ENCODE measurements at regions of chr12 and their contacts with region 1.

Region 1: DNA sequence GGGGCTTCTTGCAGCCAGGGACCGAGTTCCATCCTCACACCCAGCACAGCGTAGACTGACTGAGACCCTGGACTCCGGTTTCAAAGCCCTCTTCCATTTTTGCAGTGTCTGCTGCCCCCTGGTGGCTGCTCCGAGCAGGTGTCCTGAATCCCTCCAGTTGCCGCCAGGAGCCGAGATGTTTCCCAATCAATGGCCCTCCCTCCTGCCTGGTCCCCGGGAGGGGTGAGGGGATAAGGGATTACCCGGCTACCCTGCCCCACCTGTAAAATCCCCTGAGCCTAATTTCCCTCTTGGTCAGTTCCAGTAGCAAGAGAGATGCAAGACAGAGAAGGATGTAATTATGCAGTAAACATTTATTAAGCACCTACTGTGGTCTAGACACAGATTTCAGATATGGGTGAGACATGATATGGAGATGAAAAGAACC is 55.0 kb downstream of the PHETA1 start:
- DNase-seq: peak; percentile 54 to 65 (median 55)
- H3K4me3 ChIP-seq: no peak overlapping the region
- H3K4me3 Mint-ChIP-seq: no peak overlapping the region
- H3K27ac ChIP-seq: no peak overlapping the region
- H3K27ac Mint-ChIP-seq: no peak overlapping the region
- H3K4me1 ChIP-seq: peaks cover 6% of the 10 kb centered on the region
- H3K4me1 Mint-ChIP-seq: peaks cover 2 to 8% (median 6%) of the 10 kb centered on the region in 4 donors
- H3K27me3 ChIP-seq: no peaks in the 10 kb centered on the region
- H3K27me3 Mint-ChIP-seq: peaks cover 7 to 14% of the 10 kb centered on the region in 2 donors

Region 2: DNA sequence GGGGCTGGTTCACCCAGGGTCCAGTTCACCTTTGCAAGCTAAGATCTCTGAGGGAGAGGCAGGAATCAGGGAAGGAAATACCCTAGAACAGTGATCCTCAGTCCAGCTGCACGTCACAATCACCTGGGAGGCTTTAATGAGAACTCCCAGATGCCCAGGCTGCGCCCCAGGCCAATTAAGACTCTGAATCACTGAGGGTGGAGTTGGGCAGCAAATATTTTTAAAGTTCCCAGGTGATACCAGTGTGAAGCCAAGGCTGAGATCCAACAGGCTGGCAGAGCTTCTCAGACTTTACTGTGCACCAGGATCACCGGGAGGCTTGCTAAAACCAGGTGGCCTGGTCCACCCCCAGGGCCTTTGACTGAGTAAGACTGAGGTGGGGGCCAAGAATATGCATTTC is 417.3 kb before region 1 on chr12:
- CTCF ChIA-PET with region 1: interaction called, 7 read pairs
- POLR2A ChIA-PET with region 1: no interaction called
- intact Hi-C with region 1: loop called (anchors 1 kb)
- DNase-seq: no peak
- H3K4me3 ChIP-seq: no peak overlapping the region
- H3K4me3 Mint-ChIP-seq: no peak overlapping the region
- H3K27ac ChIP-seq: no peak overlapping the region
- H3K27ac Mint-ChIP-seq: no peak overlapping the region
- H3K4me1 ChIP-seq: peaks cover 7% of the 10 kb centered on the region
- H3K4me1 Mint-ChIP-seq: peaks cover 4 to 8% (median 5%) of the 10 kb centered on the region in 4 donors
- H3K27me3 ChIP-seq: peaks cover 4% of the 10 kb centered on the region
- H3K27me3 Mint-ChIP-seq: peaks cover 9% of the 10 kb centered on the region in 2 donors

Region 3: GRCh38 chr12:110937104-110937641 is 376.7 kb before region 1 on chr12:
- CTCF ChIA-PET with region 1: interaction called, 12 read pairs
- POLR2A ChIA-PET with region 1: no interaction called
- intact Hi-C with region 1: no loop called
- DNase-seq: peak in 4 of 5 donors; percentile 38 to 44 (median 42)
- H3K4me3 ChIP-seq: no peak overlapping the region
- H3K4me3 Mint-ChIP-seq: peak overlapping the region in 4 of 8 donors; percentile 12 to 70 (median 52)
- H3K27ac ChIP-seq: no peak overlapping the region
- H3K27ac Mint-ChIP-seq: peak overlapping the region in 1 of 7 donors; percentile 13
- H3K4me1 ChIP-seq: peaks cover 7% of the 10 kb centered on the region
- H3K4me1 Mint-ChIP-seq: peaks cover 0 to 8% (median 3%) of the 10 kb centered on the region in 4 donors
- H3K27me3 ChIP-seq: peaks cover 3% of the 10 kb centered on the region
- H3K27me3 Mint-ChIP-seq: peaks cover 9 to 12% of the 10 kb centered on the region in 2 donors

Region 4: DNA sequence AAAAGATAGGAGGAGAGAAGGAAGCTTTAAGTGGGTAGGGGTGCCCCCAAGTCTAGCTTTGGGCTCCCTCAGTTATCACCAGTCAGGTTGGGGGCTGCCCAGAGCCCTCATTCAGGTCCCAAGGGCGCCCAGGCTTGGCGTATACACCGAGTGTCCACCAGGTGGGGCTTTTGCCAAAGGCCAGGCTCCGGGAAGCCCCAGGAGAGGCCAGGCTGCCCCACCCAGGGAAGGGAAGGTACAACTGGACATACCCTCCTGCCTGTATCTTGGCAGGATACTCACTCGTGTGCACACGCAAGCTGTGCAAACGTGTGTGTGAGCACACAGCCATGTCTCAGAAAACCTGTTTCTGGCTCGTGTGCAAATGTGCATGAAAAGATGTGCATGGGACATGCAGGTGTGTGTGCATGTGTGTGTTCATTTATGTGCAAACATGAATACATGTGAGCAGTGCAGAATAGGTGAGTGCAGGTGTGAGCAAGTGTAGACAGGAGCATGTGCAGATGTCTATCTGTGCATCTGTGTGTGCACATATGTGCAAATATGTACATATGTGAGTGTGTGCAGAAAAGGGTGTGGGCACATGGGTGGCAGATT is 289.5 kb before region 1 on chr12:
- CTCF ChIA-PET with region 1: interaction called, 34 read pairs
- POLR2A ChIA-PET with region 1: no interaction called
- intact Hi-C with region 1: no loop called
- DNase-seq: peak; percentile 30 to 50 (median 36)
- H3K4me3 ChIP-seq: no peak overlapping the region
- H3K4me3 Mint-ChIP-seq: no peak overlapping the region
- H3K27ac ChIP-seq: no peak overlapping the region
- H3K27ac Mint-ChIP-seq: no peak overlapping the region
- H3K4me1 ChIP-seq: no peaks in the 10 kb centered on the region
- H3K4me1 Mint-ChIP-seq: peaks cover 0 to 9% (median 4%) of the 10 kb centered on the region in 4 donors
- H3K27me3 ChIP-seq: no peaks in the 10 kb centered on the region
- H3K27me3 Mint-ChIP-seq: peaks cover 11 to 39% of the 10 kb centered on the region in 2 donors

Measured in CD4-positive, alpha-beta memory T cell (primary cell).